ENCODE measurements at regions of chr1 and their contacts with region 1.

Region 1: DNA sequence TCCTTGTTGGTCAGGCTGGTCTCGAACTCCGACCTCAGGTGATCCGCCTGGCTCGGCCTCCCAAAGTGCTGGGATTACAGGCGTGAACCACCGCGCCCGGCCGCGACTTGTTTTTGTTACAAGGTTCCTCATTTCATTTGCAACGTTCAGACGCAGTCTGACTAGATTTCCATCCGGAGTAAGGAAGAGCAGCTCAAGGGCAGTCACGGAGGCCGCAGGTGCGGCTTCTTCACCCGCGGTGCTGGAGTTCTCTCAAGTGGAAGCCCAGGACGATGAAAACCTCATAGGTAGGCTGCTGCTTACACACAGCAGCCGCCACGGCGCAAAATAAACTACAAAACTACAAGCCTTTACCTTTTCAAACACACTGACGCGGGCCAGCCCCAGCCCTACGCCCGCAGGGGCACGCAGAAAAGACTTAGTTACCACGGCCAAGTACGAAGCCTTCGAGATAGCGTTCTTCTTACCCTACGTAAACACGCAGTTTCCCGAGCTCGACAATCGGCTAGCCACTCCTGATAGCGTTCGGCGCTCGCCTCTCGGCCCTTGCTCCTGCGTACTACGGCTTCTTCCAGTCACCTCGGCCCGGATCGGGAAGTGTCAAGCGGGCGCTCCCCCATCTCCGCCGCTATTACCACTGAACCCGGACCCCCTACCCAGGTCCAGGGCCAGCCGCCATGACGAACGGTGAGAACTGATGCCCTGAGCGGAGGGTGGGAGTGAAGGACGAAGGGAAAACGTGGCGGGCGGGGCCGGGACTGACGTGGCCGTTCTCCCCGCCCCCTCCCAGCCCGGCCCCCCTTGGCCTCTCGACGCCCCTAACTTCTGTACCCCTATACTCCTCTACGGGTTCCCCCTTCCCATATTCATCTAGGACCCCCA is at the start of gene TMEM167B:
- DNase-seq: peak; percentile 95 to 98 (median 97)
- H3K4me3 ChIP-seq: peak within 1 kb of the TSS; percentile 62 to 98 (median 82)
- H3K27ac ChIP-seq: peak within 1 kb of the TSS; percentile 83 to 95
- H3K4me1 ChIP-seq: peaks cover 13 to 28% (median 19%) of the 10 kb centered on the region in 4 experiments
- H3K27me3 ChIP-seq: no peaks in the 10 kb centered on the region

Region 2: GRCh38 chr1:109075531-109076490 is 14.6 kb before region 1 on chr1 and contains the start of gene TAF13:
- CTCF ChIA-PET with region 1: interaction called, 35 read pairs
- POLR2A ChIA-PET with region 1: interaction called, 5 read pairs
- DNase-seq: peak; percentile 90 to 93 (median 91)
- H3K4me3 ChIP-seq: peak within 1 kb of the TSS; percentile 73 to 94 (median 91)
- H3K27ac ChIP-seq: peak within 1 kb of the TSS; percentile 87 to 92
- H3K4me1 ChIP-seq: peaks cover 2 to 16% (median 10%) of the 10 kb centered on the region in 4 experiments
- H3K27me3 ChIP-seq: no peaks in the 10 kb centered on the region

Region 3: GRCh38 chr1:109112652-109113285 is 22.3 kb after region 1 on chr1:
- CTCF ChIA-PET with region 1: interaction called, 16 read pairs
- POLR2A ChIA-PET with region 1: interaction called, 3 read pairs
- DNase-seq: peak; percentile 85 to 89 (median 87)
- H3K4me3 ChIP-seq: peak overlapping the region in 5 of 7 experiments; percentile 16 to 69 (median 39)
- H3K27ac ChIP-seq: no peak overlapping the region
- H3K4me1 ChIP-seq: peaks cover 0 to 24% (median 22%) of the 10 kb centered on the region in 4 experiments
- H3K27me3 ChIP-seq: peaks cover 13 to 74% (median 31%) of the 10 kb centered on the region in 5 experiments

Measured in common myeloid progenitor, CD34-positive (primary cell).